ENCODE measurements at regions of chr1 and their contacts with region 1.

Region 1: GRCh38 chr1:176058686-176059085 is 148.4 kb downstream of the COP1 start:
- DNase-seq: peak; percentile 81 to 91
- H3K4me3 ChIP-seq: no peak overlapping the region
- H3K4me3 Mint-ChIP-seq: peak overlapping the region; percentile 35
- H3K27ac Mint-ChIP-seq: peak overlapping the region; percentile 15
- H3K4me1 ChIP-seq: peaks cover 36% of the 10 kb centered on the region
- H3K4me1 Mint-ChIP-seq: peaks cover 22% of the 10 kb centered on the region
- H3K27me3 ChIP-seq: no peaks in the 10 kb centered on the region
- H3K27me3 Mint-ChIP-seq: no peaks in the 10 kb centered on the region
- CTCF ChIP-seq: no peak

Region 2: DNA sequence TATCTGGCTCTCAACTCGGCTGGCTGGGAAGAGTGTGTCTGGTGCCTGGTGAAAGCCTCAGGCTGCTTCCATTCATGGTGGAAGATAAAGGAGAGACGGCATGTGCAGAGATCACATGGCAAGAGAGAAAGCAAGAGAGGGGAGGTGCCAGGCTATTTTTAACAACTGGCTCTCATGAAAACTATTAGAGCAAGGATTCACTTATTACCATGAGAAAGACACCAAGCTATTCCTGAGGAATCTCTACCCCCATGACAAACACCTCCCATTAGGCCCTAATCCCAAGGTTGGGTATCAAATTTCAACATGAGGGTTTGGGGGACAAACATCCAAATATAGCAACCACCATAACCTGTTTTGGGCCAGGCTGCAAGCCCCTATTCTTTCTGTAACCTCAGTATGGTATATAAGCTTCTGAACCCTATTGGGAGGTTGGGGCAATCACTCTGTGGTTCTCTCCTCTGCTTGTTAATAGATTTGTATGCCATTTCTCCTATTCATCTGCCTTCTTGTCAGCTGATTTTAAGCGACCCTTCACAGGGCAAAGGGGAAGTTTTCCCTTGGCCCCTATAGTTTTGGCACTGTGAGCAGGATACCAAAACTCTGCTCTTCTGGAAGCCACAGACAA is 136.3 kb before region 1 on chr1:
- CTCF ChIA-PET with region 1: no interaction called
- POLR2A ChIA-PET with region 1: no interaction called
- intact Hi-C with region 1: no loop called
- DNase-seq: no peak
- H3K4me3 ChIP-seq: no peak overlapping the region
- H3K4me3 Mint-ChIP-seq: no peak overlapping the region
- H3K27ac Mint-ChIP-seq: no peak overlapping the region
- H3K4me1 ChIP-seq: peaks cover 14% of the 10 kb centered on the region
- H3K4me1 Mint-ChIP-seq: no peaks in the 10 kb centered on the region
- H3K27me3 ChIP-seq: no peaks in the 10 kb centered on the region
- H3K27me3 Mint-ChIP-seq: no peaks in the 10 kb centered on the region
- CTCF ChIP-seq: no peak

Region 3: DNA sequence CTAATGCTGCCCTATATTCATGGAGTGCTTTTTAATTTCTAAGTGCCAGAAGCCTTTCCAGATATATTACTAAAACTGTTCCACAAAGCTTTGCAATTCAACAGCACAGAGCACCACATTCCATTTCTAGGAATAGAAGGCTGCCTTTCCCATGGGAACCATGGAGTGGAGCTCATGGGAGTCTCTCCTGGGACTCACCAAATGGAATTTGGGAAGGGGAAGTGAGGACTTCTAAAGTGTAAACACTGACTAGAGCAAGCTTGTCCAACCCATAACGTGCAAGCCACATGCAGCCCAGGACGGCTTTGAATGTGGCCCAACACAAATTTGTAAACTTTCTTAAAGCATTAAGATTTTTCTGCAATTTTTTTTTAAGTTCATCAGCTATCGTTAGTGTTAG is 124.9 kb before region 1 on chr1:
- CTCF ChIA-PET with region 1: no interaction called
- POLR2A ChIA-PET with region 1: no interaction called
- intact Hi-C with region 1: no loop called
- DNase-seq: peak in 1 of 2 experiments; percentile 30
- H3K4me3 ChIP-seq: no peak overlapping the region
- H3K4me3 Mint-ChIP-seq: no peak overlapping the region
- H3K27ac Mint-ChIP-seq: no peak overlapping the region
- H3K4me1 ChIP-seq: no peaks in the 10 kb centered on the region
- H3K4me1 Mint-ChIP-seq: no peaks in the 10 kb centered on the region
- H3K27me3 ChIP-seq: no peaks in the 10 kb centered on the region
- H3K27me3 Mint-ChIP-seq: no peaks in the 10 kb centered on the region
- CTCF ChIP-seq: peak in 1 of 2 experiments; percentile 12

Region 4: DNA sequence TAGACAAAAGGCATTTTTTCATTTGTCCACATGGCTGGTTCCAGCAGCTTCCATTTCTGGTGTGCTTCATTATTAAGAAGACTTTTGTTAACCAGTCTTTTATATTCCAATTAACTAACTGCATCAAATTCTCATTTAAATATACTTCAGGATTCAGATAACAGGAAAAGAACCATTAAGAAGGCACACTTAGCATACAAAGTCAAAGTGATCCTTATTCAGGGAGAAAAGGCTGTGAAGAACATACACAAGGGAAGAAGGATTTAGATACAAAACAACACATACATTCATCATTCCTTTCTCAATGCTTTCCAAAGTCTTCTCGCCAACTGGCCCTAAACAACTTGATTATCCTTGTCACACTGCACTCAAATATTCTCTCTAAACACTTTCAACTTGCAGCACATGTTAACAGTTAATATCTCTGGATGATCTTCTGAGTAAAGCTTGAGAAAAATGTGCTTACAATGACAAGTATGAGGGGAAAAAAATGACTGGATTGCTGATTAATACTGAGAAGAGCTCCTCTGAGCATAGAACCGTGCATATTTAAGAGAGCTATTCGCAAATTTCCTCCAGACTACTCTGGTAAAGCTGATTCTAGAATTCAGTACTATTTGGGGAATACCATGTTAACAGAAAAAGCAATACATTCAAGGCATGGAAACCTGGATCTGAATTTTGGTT is 90.1 kb before region 1 on chr1:
- CTCF ChIA-PET with region 1: no interaction called
- POLR2A ChIA-PET with region 1: no interaction called
- intact Hi-C with region 1: loop called (anchors 1 kb)
- DNase-seq: no peak
- H3K4me3 ChIP-seq: no peak overlapping the region
- H3K4me3 Mint-ChIP-seq: no peak overlapping the region
- H3K27ac Mint-ChIP-seq: no peak overlapping the region
- H3K4me1 ChIP-seq: peaks cover 31% of the 10 kb centered on the region
- H3K4me1 Mint-ChIP-seq: no peaks in the 10 kb centered on the region
- H3K27me3 ChIP-seq: no peaks in the 10 kb centered on the region
- H3K27me3 Mint-ChIP-seq: no peaks in the 10 kb centered on the region
- CTCF ChIP-seq: no peak

Region 5: GRCh38 chr1:175984813-175985212 is 73.9 kb before region 1 on chr1:
- CTCF ChIA-PET with region 1: no interaction called
- POLR2A ChIA-PET with region 1: no interaction called
- intact Hi-C with region 1: loop called (anchors 2 kb)
- DNase-seq: peak in 1 of 2 experiments; percentile 53
- H3K4me3 ChIP-seq: no peak overlapping the region
- H3K4me3 Mint-ChIP-seq: peak overlapping the region; percentile 14
- H3K27ac Mint-ChIP-seq: peak overlapping the region; percentile 9
- H3K4me1 ChIP-seq: peaks cover 27% of the 10 kb centered on the region
- H3K4me1 Mint-ChIP-seq: peaks cover 14% of the 10 kb centered on the region
- H3K27me3 ChIP-seq: no peaks in the 10 kb centered on the region
- H3K27me3 Mint-ChIP-seq: no peaks in the 10 kb centered on the region
- CTCF ChIP-seq: no peak

Region 6: DNA sequence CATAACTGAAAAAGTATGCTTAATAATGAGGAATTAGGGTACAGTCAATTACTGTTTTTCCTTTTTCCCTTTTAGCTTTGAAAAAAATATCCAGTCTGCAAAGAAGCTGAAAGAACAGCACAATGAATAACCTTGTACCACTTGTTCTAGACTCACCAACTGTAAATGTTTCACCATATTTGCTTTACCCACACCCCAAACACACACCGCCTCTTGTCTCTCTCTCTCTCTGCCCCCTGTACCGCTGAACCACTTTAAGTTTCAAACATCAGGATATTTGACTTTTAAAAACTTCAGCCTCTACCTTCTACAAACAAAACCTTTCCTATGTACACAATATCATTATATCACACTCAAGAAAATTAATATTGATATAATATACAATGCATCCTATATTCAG is 48.7 kb before region 1 on chr1:
- CTCF ChIA-PET with region 1: no interaction called
- POLR2A ChIA-PET with region 1: no interaction called
- intact Hi-C with region 1: no loop called
- DNase-seq: no peak
- H3K4me3 ChIP-seq: no peak overlapping the region
- H3K4me3 Mint-ChIP-seq: no peak overlapping the region
- H3K27ac Mint-ChIP-seq: no peak overlapping the region
- H3K4me1 ChIP-seq: no peaks in the 10 kb centered on the region
- H3K4me1 Mint-ChIP-seq: no peaks in the 10 kb centered on the region
- H3K27me3 ChIP-seq: no peaks in the 10 kb centered on the region
- H3K27me3 Mint-ChIP-seq: no peaks in the 10 kb centered on the region
- CTCF ChIP-seq: no peak

Region 7: DNA sequence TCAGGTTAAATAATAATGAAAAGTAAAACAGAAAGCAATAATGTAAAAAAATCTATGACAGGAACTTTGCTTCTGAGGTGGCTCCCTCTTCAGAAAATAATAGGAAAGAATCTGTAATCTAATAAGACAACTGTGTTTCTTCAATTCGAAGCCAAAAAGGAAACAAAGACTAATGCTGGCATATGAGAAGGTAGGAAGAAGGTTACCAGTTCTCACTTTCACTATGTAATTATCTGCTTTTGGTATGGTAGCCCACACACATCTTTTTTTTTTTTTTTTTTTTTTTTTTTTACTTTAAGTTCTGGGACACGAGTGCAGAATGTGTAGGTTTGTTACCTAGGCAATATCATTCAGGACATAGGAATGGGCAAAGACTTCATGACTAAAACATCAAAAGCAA is 101.3 kb after region 1 on chr1:
- CTCF ChIA-PET with region 1: no interaction called
- POLR2A ChIA-PET with region 1: no interaction called
- intact Hi-C with region 1: no loop called
- DNase-seq: no peak
- H3K4me3 ChIP-seq: no peak overlapping the region
- H3K4me3 Mint-ChIP-seq: no peak overlapping the region
- H3K27ac Mint-ChIP-seq: no peak overlapping the region
- H3K4me1 ChIP-seq: no peaks in the 10 kb centered on the region
- H3K4me1 Mint-ChIP-seq: peaks cover 7% of the 10 kb centered on the region
- H3K27me3 ChIP-seq: no peaks in the 10 kb centered on the region
- H3K27me3 Mint-ChIP-seq: no peaks in the 10 kb centered on the region
- CTCF ChIP-seq: no peak